Left ventricle myocardium inferior (tissue), 1 donor: ENCODE measurements at regions of chr3 and their contacts with region 1.

Region 1: DNA sequence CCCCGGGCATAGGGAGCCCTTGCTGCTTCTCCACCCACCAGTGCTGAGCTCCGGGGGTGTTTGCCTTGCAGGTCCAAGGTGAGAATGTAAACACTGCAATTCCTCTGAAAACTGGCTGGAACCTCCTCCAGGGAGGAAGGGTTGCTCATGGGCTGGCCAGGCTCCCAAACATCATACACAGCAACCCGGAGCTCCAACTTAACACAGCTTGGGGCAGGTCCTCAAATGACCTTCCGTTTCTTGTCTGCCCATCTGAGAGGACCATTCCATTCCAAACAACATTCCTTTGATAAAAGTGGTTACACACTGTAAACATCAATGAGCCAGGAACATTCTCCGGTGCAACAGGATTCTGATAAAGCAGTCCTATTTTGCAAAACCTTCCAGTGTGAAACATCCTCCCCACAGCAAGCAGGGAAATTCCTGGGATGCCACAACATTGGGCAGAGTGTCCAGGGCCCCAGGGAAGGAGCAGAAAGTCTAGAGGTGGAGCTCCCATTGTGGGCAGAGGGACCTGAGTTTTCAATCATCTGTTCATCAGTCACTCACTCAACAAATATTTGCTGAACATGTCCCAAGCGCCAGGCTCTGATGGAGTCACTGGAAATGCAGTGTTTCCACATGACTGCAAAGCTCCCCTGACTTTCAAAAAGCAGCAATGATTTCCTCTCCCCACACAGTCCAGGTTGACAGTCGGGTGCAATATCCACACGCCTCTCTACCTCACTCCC is 7.3 kb upstream of the HEG1 start:
- DNase-seq: peak; percentile 52
- H3K4me3 ChIP-seq: peak overlapping the region; percentile 57
- H3K27ac ChIP-seq: peak overlapping the region; percentile 89
- H3K4me1 ChIP-seq: peaks cover 53% of the 10 kb centered on the region
- H3K27me3 ChIP-seq: no peaks in the 10 kb centered on the region
- CTCF ChIP-seq: no peak

Region 2: DNA sequence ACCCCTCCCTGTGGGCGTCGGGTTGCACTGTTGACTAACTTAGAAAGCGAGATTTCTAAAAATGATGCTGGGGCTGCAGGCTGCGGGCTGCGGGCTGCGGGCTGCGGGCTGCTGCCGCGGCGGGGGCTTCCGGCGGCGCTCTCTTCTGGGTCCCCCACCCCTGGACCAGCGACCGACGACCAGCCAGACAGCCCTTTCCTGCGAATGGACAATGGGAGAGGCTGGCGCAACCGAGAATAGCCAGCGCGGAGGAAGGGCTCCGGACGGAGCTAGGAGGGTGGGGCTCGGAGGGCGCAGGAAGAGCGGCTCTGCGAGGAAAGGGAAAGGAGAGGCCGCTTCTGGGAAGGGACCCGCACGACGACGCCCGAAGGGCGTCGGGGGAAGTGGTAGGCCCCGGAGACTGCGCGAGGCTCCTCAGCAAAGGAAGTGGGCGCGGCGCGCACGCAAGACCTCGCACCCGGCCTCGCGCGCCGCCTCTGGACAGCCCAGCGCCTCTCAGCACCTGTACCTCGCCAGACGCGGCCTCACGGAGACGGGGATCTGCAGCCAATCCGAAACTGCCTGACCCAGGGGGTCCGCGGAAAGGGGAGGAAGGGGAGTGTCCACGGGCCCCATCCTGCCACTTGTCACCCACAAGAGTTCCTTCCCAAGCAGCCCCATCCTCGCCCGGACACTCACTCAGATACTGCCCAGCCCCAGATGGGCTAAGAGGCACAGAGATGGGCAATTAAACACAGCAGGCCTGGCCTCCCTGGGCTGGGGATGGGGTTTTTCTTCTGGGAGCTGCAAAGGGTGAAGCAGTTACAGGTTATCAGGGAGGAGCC is 78.8 kb after region 1 on chr3:
- intact Hi-C with region 1: loop called (anchors 10 kb)
- DNase-seq: peak; percentile 83
- H3K4me3 ChIP-seq: peak overlapping the region; percentile 61
- H3K27ac ChIP-seq: peak overlapping the region; percentile 95
- H3K4me1 ChIP-seq: peaks cover 71% of the 10 kb centered on the region
- H3K27me3 ChIP-seq: no peaks in the 10 kb centered on the region
- CTCF ChIP-seq: peak; percentile 62